GM18951 (cell line): ENCODE measurements at regions of chr15 and their contacts with region 1.

Region 1: GRCh38 chr15:72783563-72784237 is at the start of gene ADPGK:
- POLR2A ChIP-seq: peak; percentile 94

Region 2: GRCh38 chr15:72948662-72949061 is 165.0 kb after region 1 on chr15:
- in situ Hi-C with region 1: no loop called
- POLR2A ChIP-seq: no peak

Region 3: GRCh38 chr15:73051811-73052678 is 268.3 kb after region 1 on chr15 and contains the start of gene NEO1:
- in situ Hi-C with region 1: loop called (anchors 10 kb)
- POLR2A ChIP-seq: peak; percentile 26